Naive thymus-derived CD4-positive, alpha-beta T cell (primary cell): ENCODE measurements at regions of chr3 and their contacts with region 1.

Region 1: DNA sequence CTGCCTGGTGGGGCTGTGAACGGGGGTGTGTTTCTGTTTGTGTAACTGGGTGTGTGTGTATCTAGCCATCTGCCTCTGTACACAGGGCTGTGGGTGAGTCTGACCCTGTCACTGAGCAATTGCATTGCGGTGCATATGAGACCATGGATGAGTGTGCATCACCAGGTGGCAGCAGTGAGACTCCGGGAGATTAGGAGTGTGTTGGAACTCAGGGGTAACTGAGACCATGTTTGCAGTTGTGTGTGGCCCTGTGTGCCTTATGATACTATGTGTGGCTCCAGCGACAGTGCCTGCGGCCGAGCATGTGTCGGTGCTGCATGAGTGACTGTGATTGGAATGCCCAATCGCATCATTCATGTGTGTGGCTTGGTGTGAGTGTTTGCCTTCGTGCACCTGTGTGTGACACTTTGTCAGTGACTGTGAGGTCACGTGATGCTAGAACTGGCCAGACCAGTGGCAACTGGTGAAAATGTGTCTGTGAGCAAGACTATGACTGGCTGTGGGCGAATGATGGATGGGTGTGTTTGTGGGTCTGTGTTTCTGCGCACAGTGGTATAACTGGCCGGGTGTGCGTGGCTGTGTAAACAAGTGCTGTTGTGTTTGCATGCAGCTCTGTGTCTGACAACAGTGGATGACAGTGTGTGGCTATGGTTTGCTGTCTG is 14.0 kb downstream of the VILL start:
- DNase-seq: peak in 5 of 9 donors; percentile 29 to 46 (median 34)
- ATAC-seq: peak; percentile 64
- H3K4me3 ChIP-seq: no peak overlapping the region
- H3K4me3 Mint-ChIP-seq: no peak overlapping the region
- H3K27ac ChIP-seq: peak overlapping the region; percentile 29
- H3K27ac Mint-ChIP-seq: peak overlapping the region; percentile 1 to 83 (median 82)
- H3K4me1 ChIP-seq: no peaks in the 10 kb centered on the region
- H3K4me1 Mint-ChIP-seq: peaks cover 17 to 25% (median 22%) of the 10 kb centered on the region in 7 donors
- H3K27me3 ChIP-seq: no peaks in the 10 kb centered on the region
- H3K27me3 Mint-ChIP-seq: no peaks in the 10 kb centered on the region

Region 2: DNA sequence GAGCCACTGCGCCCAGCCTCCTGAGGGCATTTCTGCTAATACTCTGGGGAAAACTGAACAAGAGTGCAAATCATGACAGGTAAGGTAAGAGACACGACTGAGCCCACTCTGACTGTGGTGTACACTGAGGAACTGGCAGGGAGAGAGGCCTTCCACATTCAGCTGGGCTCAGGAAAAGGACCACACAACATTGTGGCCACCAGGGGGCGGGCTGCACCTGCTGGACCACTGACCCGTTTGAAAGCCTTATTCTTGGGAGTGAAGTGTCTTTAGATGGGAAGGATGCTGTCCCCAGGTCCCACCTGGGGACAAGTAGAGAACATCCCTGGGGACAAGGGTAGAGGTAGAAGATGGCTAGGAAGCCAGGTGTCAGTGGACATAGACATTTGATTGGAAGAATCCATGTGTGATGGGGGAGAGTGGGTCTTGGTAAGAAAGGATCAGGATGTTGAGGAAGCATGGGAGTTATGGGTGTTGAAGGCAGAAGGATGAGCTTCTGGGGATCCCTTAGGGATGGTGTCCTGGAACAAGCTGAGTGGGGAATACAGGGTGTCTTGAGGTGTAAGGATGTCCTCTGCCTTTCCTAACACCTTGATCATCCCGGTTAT is 149.1 kb before region 1 on chr3:
- CTCF ChIA-PET with region 1: interaction called, 6 read pairs
- POLR2A ChIA-PET with region 1: no interaction called
- intact Hi-C with region 1: loop called in 1 of 2 experiments (anchors 1 kb)
- DNase-seq: peak; percentile 53 to 82 (median 67)
- ATAC-seq: peak; percentile 59
- H3K4me3 ChIP-seq: no peak overlapping the region
- H3K4me3 Mint-ChIP-seq: no peak overlapping the region
- H3K27ac ChIP-seq: no peak overlapping the region
- H3K27ac Mint-ChIP-seq: peak overlapping the region in 3 of 9 donors; percentile 16 to 83 (median 42)
- H3K4me1 ChIP-seq: peaks cover 0 to 7% of the 10 kb centered on the region in 2 donors
- H3K4me1 Mint-ChIP-seq: peaks cover 2 to 12% (median 6%) of the 10 kb centered on the region in 7 donors
- H3K27me3 ChIP-seq: no peaks in the 10 kb centered on the region
- H3K27me3 Mint-ChIP-seq: peaks cover 0 to 4% (median 0%) of the 10 kb centered on the region in 5 donors

Region 3: DNA sequence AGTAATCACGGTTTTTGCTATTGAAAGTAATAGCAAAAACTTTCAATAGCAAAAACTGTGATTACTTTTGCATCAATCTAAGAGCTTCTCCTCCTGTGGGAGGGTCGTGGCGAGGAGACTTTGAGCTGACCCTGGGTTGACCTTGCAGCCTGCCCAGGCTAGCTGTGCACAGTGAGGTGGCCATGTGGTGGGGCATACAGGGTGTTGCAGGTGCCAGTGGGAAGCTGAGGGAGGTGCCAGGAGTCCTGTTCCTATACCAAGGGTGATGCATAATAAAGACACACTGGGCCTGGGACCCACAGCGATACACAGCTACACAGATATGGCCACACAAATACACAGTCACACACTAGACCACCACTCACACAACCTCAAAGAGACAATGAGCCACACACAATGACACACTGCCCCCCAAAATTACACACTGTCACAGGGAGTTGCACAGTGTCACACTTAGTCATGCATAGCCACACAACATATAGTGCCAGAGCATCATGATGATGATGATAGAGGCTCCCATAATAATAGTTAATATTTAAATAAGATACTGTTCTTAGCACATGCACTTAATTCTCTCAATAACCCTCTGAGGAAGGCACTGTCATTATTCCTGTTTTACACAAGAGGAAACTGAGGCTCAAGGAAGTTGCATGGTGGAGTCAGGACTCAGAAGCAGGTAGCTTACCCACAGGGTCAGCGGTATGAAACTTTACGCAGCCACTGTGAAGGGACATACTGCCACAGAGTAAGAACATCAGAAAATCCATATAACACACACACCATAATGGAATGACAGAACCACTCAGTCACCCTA is 18.6 kb after region 1 on chr3:
- CTCF ChIA-PET with region 1: interaction called, 11 read pairs
- POLR2A ChIA-PET with region 1: interaction called, 6 read pairs
- intact Hi-C with region 1: no loop called
- DNase-seq: no peak
- ATAC-seq: no peak
- H3K4me3 ChIP-seq: peak overlapping the region; percentile 98
- H3K4me3 Mint-ChIP-seq: peak overlapping the region; percentile 78 to 98 (median 88)
- H3K27ac ChIP-seq: peak overlapping the region; percentile 85
- H3K27ac Mint-ChIP-seq: peak overlapping the region; percentile 81 to 99 (median 90)
- H3K4me1 ChIP-seq: peaks cover 17 to 22% of the 10 kb centered on the region in 2 donors
- H3K4me1 Mint-ChIP-seq: peaks cover 20 to 42% (median 32%) of the 10 kb centered on the region in 7 donors
- H3K27me3 ChIP-seq: no peaks in the 10 kb centered on the region
- H3K27me3 Mint-ChIP-seq: peaks cover 0 to 13% (median 0%) of the 10 kb centered on the region in 5 donors

Region 4: GRCh38 chr3:39051647-39052561 is 1047.4 kb after region 1 on chr3 and contains the starts of genes SCN11A and WDR48:
- CTCF ChIA-PET with region 1: no interaction called
- POLR2A ChIA-PET with region 1: no interaction called
- intact Hi-C with region 1: no loop called
- DNase-seq: peak; percentile 78 to 95 (median 90)
- ATAC-seq: peak; percentile 93
- H3K4me3 ChIP-seq: peak within 1 kb of the TSS; percentile 80
- H3K4me3 Mint-ChIP-seq: peak within 1 kb of the TSS; percentile 91 to 99 (median 99)
- H3K27ac ChIP-seq: peak within 1 kb of the TSS; percentile 98
- H3K27ac Mint-ChIP-seq: peak within 1 kb of the TSS; percentile 95 to 100 (median 99)
- H3K4me1 ChIP-seq: peaks cover 7 to 16% of the 10 kb centered on the region in 2 donors
- H3K4me1 Mint-ChIP-seq: peaks cover 32 to 81% (median 77%) of the 10 kb centered on the region in 7 donors
- H3K27me3 ChIP-seq: no peaks in the 10 kb centered on the region
- H3K27me3 Mint-ChIP-seq: no peaks in the 10 kb centered on the region
- total RNA-seq, gene SCN11A: 0.07 to 0.32 (median 0.19) TPM
- total RNA-seq, gene WDR48: 46.7 to 97.7 (median 68.0) TPM